CD4-positive, alpha-beta T cell (primary cell): ENCODE measurements at regions of chr10 and their contacts with region 1.

Region 1: GRCh38 chr10:21961847-21962246 is 41.7 kb downstream of the DNAJC1 start:
- DNase-seq: no peak
- ATAC-seq: no peak
- H3K4me3 ChIP-seq: no peak overlapping the region
- H3K4me3 Mint-ChIP-seq: no peak overlapping the region
- H3K27ac ChIP-seq: no peak overlapping the region
- H3K27ac Mint-ChIP-seq: no peak overlapping the region
- H3K4me1 ChIP-seq: no peaks in the 10 kb centered on the region
- H3K4me1 Mint-ChIP-seq: peaks cover 16% of the 10 kb centered on the region
- H3K27me3 ChIP-seq: no peaks in the 10 kb centered on the region
- H3K27me3 Mint-ChIP-seq: no peaks in the 10 kb centered on the region
- CTCF ChIP-seq: no peak

Region 2: DNA sequence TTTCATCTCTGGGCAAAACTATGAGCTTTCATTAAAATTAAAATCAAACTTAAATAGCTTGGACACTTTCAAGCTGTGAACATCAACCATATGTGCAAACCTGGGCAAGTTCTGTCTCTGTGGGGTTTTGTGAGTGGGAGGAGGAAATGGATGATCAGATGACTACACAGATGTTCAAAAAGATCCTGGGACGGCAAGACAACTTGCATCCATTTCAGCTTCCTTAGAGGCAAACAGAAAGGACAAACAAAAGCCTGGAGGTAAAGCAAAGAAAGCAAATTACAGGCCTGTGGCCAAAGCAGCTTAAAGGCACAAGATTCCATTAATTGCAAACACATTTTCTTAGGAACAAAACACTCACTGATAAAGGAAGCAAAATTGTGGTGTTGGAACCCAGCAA is 1286.9 kb before region 1 on chr10:
- CTCF ChIA-PET with region 1: no interaction called
- POLR2A ChIA-PET with region 1: no interaction called
- intact Hi-C with region 1: no loop called
- DNase-seq: no peak
- ATAC-seq: no peak
- H3K4me3 ChIP-seq: no peak overlapping the region
- H3K4me3 Mint-ChIP-seq: no peak overlapping the region
- H3K27ac ChIP-seq: no peak overlapping the region
- H3K27ac Mint-ChIP-seq: no peak overlapping the region
- H3K4me1 ChIP-seq: no peaks in the 10 kb centered on the region
- H3K4me1 Mint-ChIP-seq: no peaks in the 10 kb centered on the region
- H3K27me3 ChIP-seq: peaks cover 0 to 2% of the 10 kb centered on the region in 2 experiments
- H3K27me3 Mint-ChIP-seq: no peaks in the 10 kb centered on the region
- CTCF ChIP-seq: no peak

Region 3: GRCh38 chr10:21100871-21101514 is 860.9 kb before region 1 on chr10:
- CTCF ChIA-PET with region 1: no interaction called
- POLR2A ChIA-PET with region 1: no interaction called
- intact Hi-C with region 1: loop called in 1 of 2 experiments (anchors 5 kb)
- DNase-seq: no peak
- ATAC-seq: no peak
- H3K4me3 ChIP-seq: no peak overlapping the region
- H3K4me3 Mint-ChIP-seq: no peak overlapping the region
- H3K27ac ChIP-seq: no peak overlapping the region
- H3K27ac Mint-ChIP-seq: no peak overlapping the region
- H3K4me1 ChIP-seq: no peaks in the 10 kb centered on the region
- H3K4me1 Mint-ChIP-seq: no peaks in the 10 kb centered on the region
- H3K27me3 ChIP-seq: no peaks in the 10 kb centered on the region
- H3K27me3 Mint-ChIP-seq: no peaks in the 10 kb centered on the region
- CTCF ChIP-seq: no peak

Region 4: DNA sequence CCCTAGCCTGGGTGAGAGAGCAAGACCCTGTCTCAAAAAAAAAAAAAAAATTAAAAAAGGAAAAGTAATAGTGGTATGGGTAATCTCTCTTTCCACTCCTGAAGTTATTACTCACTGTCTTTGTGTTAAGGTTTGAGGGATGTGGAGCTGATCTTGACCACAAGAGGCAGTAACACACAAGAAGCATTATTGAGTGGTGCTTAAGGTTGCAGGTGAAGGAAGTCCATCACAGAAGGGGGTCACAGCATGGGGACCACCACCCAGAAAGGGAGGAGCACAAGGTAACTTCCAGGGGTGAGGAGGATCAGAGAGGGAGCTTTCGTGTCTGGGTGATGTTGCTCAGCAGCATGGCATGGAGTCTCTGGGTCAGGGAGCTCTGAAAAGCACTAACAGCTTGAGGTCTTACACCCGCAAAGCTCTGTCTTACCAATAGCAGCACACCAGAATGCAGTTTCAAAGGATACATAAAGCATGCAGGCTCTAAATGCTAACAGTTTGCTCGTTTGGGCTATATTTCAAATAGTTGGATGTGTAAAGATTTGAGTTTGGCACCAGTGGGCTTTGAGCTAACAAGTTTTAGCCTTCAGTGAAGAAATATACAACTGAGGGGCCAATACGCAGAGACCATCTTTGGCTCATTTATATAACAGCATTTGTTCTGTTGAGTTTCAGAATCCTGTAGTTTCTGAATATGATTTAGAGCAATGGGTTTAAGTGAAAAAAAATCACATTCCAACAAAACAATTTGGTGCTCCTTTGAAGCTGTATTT is 142.0 kb after region 1 on chr10:
- CTCF ChIA-PET with region 1: no interaction called
- POLR2A ChIA-PET with region 1: no interaction called
- intact Hi-C with region 1: no loop called
- DNase-seq: peak in 3 of 14 experiments; percentile 9 to 26 (median 14)
- ATAC-seq: peak; percentile 44
- H3K4me3 ChIP-seq: no peak overlapping the region
- H3K4me3 Mint-ChIP-seq: no peak overlapping the region
- H3K27ac ChIP-seq: no peak overlapping the region
- H3K27ac Mint-ChIP-seq: no peak overlapping the region
- H3K4me1 ChIP-seq: no peaks in the 10 kb centered on the region
- H3K4me1 Mint-ChIP-seq: no peaks in the 10 kb centered on the region
- H3K27me3 ChIP-seq: no peaks in the 10 kb centered on the region
- H3K27me3 Mint-ChIP-seq: no peaks in the 10 kb centered on the region
- CTCF ChIP-seq: peak; percentile 23